ENCODE measurements at regions of chr20 and their contacts with region 1.

Region 1: DNA sequence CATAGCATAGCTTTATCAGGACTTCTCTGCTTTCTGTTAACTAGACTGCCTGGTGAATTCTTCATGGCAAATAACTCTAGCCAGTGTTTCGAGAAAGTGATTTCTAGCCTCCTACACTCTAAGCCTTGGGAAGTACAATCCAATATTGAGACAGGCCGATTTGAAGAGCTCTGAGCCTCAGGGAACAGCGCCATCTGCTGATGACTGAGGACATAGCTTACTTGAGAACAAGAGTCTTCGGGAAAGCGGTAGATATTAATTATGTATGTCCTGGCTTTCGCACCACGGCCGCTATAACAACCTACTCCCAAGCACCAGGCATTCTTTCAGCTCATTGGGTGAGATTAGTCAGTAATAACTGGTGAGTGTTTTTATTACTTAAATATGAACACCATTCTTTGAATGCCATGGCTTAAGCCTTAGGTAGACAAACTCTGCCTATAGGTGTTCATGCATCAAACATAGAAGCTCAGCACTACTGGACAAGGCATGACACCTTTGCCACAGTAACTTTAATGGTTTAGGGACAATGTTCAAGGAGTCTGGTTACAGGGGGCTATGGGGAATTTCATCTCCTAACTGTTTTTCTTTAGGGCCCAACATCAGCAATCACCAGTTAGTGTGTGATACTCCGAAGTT is 518.6 kb downstream of the BMP2 start:
- DNase-seq: peak; percentile 88
- H3K4me3 ChIP-seq: no peak overlapping the region
- H3K27ac ChIP-seq: no peak overlapping the region
- H3K4me1 ChIP-seq: no peaks in the 10 kb centered on the region
- H3K27me3 ChIP-seq: peaks cover 0 to 2% of the 10 kb centered on the region in 2 experiments
- CTCF ChIP-seq: peak; percentile 86
- POLR2A ChIP-seq: no peak

Region 2: DNA sequence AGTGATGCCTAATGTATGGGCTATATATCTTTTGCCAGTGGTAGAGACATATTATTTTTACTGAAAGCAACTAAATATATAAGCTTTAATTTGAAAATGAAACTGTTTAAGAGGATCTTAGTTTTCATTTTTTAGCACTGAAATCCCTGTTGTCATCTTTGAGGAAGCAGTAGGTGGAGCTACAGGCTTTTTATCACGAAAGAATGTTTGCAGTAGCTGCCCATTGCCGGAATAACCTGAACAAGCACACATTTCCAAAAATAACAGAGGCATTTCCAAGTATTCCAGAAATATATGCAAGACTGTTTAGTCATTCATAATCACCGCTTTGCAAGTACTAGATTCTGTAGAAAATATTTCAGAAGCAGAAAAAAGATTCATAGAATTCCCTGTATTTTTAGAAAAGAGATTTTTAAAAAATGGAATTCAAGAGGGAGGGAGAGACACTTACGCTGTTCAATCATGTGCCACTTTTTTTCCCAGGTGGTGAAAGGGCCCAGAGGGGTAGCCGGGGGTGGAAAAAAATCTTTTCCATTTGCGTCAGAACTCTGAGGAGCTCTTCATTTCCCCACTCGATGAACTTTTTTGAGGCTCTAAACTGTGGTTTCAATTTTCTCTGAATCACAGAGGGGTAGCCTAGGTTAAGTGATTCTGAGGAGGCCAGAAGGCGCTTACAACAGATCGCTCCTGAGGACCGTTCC is 1020.7 kb before region 1 on chr20:
- CTCF ChIA-PET with region 1: interaction called, 35 read pairs
- POLR2A ChIA-PET with region 1: no interaction called
- dilution Hi-C with region 1: no loop called
- intact Hi-C with region 1: loop called (anchors 2 kb)
- DNase-seq: peak; percentile 82
- H3K4me3 ChIP-seq: peak overlapping the region in 1 of 3 experiments; percentile 59
- H3K27ac ChIP-seq: peak overlapping the region; percentile 18
- H3K4me1 ChIP-seq: peaks cover 10% of the 10 kb centered on the region
- H3K27me3 ChIP-seq: peaks cover 0 to 4% of the 10 kb centered on the region in 2 experiments
- CTCF ChIP-seq: peak; percentile 11 to 29
- POLR2A ChIP-seq: no peak

Region 3: GRCh38 chr20:6767536-6768227 is 518.4 kb before region 1 on chr20 and contains the start of gene BMP2:
- CTCF ChIA-PET with region 1: interaction called, 14 read pairs
- POLR2A ChIA-PET with region 1: no interaction called
- dilution Hi-C with region 1: no loop called
- intact Hi-C with region 1: loop called (anchors 2 kb)
- DNase-seq: peak; percentile 74
- H3K4me3 ChIP-seq: peak within 1 kb of the TSS; percentile 87 to 99 (median 92)
- H3K27ac ChIP-seq: peak within 1 kb of the TSS; percentile 61
- H3K4me1 ChIP-seq: peaks cover 21% of the 10 kb centered on the region
- H3K27me3 ChIP-seq: no peaks in the 10 kb centered on the region
- CTCF ChIP-seq: no peak
- POLR2A ChIP-seq: peak; percentile 46
- total RNA-seq, gene BMP2: 11.1 and 15.7 TPM in 2 replicates

Region 4: DNA sequence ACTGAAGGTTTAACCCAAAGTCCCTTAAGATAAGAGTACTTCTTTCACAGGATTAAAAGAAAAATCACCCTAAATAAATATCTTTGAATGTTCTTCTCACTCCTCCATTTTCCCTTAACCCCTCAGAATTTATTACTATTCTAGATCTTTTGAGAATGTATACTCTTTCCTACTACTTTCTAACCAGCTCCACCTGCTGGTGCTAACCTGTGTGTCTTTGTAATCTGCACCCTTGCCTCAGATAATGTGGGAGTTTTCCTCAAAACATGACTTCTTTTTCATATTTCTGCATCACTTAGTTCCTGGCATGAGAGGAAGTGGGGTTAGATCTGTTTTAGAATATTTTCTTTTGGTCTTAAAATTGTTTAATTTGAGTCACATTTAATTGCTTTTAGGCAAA is 124.3 kb before region 1 on chr20:
- CTCF ChIA-PET with region 1: interaction called, 10 read pairs
- POLR2A ChIA-PET with region 1: no interaction called
- dilution Hi-C with region 1: no loop called
- intact Hi-C with region 1: no loop called
- DNase-seq: peak; percentile 36
- H3K4me3 ChIP-seq: no peak overlapping the region
- H3K27ac ChIP-seq: no peak overlapping the region
- H3K4me1 ChIP-seq: peaks cover 16% of the 10 kb centered on the region
- H3K27me3 ChIP-seq: no peaks in the 10 kb centered on the region
- CTCF ChIP-seq: peak in 1 of 2 donors; percentile 35
- POLR2A ChIP-seq: no peak

Region 5: GRCh38 chr20:7248281-7249201 is 37.5 kb before region 1 on chr20:
- CTCF ChIA-PET with region 1: interaction called, 10 read pairs
- POLR2A ChIA-PET with region 1: no interaction called
- dilution Hi-C with region 1: no loop called
- intact Hi-C with region 1: no loop called
- DNase-seq: no peak
- H3K4me3 ChIP-seq: no peak overlapping the region
- H3K27ac ChIP-seq: no peak overlapping the region
- H3K4me1 ChIP-seq: no peaks in the 10 kb centered on the region
- H3K27me3 ChIP-seq: no peaks in the 10 kb centered on the region
- CTCF ChIP-seq: no peak
- POLR2A ChIP-seq: no peak

Region 6: GRCh38 chr20:7926767-7927166 is 640.7 kb after region 1 on chr20:
- CTCF ChIA-PET with region 1: interaction called, 12 read pairs
- POLR2A ChIA-PET with region 1: no interaction called
- dilution Hi-C with region 1: no loop called
- intact Hi-C with region 1: loop called (anchors 2 kb)
- DNase-seq: peak; percentile 75
- H3K4me3 ChIP-seq: no peak overlapping the region
- H3K27ac ChIP-seq: peak overlapping the region; percentile 92
- H3K4me1 ChIP-seq: peaks cover 26% of the 10 kb centered on the region
- H3K27me3 ChIP-seq: no peaks in the 10 kb centered on the region
- CTCF ChIP-seq: peak; percentile 47 to 52
- POLR2A ChIP-seq: no peak